Vagina (tissue), 2 donors: ENCODE measurements at regions of chr5 and their contacts with region 1.

Region 1: DNA sequence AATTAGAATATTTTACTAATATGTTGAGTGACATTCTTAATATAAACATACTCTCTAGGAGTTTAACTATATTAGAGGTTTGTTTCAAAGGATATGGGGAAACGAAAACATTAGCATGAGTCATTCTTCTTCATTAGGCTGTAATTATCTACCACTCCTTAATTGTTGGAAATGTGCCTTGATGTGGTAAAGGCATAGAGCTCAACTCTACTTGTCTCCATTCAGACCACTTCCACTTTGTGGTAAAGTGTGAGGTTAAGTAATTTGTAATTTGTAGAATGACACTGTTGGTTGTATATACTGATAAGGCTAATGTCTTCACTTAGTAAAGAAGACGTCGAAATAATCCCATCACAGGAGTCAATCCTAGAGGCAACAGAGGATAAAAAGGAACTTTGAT is 58.1 kb downstream of the HAPLN1 start:
- DNase-seq: no peak
- H3K4me3 ChIP-seq: no peak overlapping the region
- H3K27ac ChIP-seq: no peak overlapping the region
- H3K4me1 ChIP-seq: no peaks in the 10 kb centered on the region
- H3K27me3 ChIP-seq: no peaks in the 10 kb centered on the region
- CTCF ChIP-seq: no peak
- POLR2A ChIP-seq: no peak

Region 2: GRCh38 chr5:83595215-83595614 is 67.3 kb before region 1 on chr5:
- intact Hi-C with region 1: no loop called
- DNase-seq: no peak
- H3K4me3 ChIP-seq: no peak overlapping the region
- H3K27ac ChIP-seq: no peak overlapping the region
- H3K4me1 ChIP-seq: no peaks in the 10 kb centered on the region
- H3K27me3 ChIP-seq: no peaks in the 10 kb centered on the region
- CTCF ChIP-seq: no peak
- POLR2A ChIP-seq: no peak

Region 3: GRCh38 chr5:84859056-84859455 is 1196.5 kb after region 1 on chr5:
- intact Hi-C with region 1: loop called (anchors 10 kb)
- DNase-seq: no peak
- H3K4me3 ChIP-seq: no peak overlapping the region
- H3K27ac ChIP-seq: no peak overlapping the region
- H3K4me1 ChIP-seq: no peaks in the 10 kb centered on the region
- H3K27me3 ChIP-seq: no peaks in the 10 kb centered on the region
- CTCF ChIP-seq: no peak
- POLR2A ChIP-seq: no peak